Mammary epithelial cell (primary cell): ENCODE measurements at regions of chr21 and their contacts with region 1.

Region 1: GRCh38 chr21:42931576-42932258 is 6.3 kb upstream of the ERVH48-1 start:
- DNase-seq: no peak
- H3K4me3 ChIP-seq: no peak overlapping the region
- H3K27ac ChIP-seq: no peak overlapping the region
- H3K4me1 ChIP-seq: no peaks in the 10 kb centered on the region
- H3K27me3 ChIP-seq: no peaks in the 10 kb centered on the region
- CTCF ChIP-seq: no peak

Region 2: GRCh38 chr21:42818328-42818749 is 113.4 kb before region 1 on chr21:
- CTCF ChIA-PET with region 1: no interaction called
- dilution Hi-C with region 1: no loop called
- in situ Hi-C with region 1: no loop called
- intact Hi-C with region 1: no loop called
- DNase-seq: peak; percentile 45
- H3K4me3 ChIP-seq: no peak overlapping the region
- H3K27ac ChIP-seq: no peak overlapping the region
- H3K4me1 ChIP-seq: no peaks in the 10 kb centered on the region
- H3K27me3 ChIP-seq: no peaks in the 10 kb centered on the region
- CTCF ChIP-seq: peak; percentile 92 to 93

Region 3: DNA sequence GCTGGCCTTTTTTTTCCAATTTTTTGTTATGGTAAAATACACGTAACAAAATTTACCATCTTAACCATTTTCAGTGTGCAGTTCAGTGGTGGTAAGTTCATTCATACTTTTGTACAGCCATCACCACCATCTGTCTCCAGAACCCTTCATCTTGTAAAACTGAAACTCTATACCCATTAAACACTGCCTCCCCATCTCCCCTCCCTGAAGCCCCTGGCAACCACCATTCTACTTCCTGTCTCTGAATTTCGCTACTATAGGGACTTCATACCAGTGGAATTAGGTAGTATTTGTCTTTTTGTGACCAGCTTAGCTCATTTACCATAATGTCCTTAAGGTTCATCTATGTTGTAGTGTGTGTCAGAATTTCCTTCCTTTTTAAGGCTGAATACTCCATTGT is 51.4 kb after region 1 on chr21:
- CTCF ChIA-PET with region 1: no interaction called
- dilution Hi-C with region 1: loop called (anchors 5 kb)
- in situ Hi-C with region 1: loop called in 1 of 2 experiments (anchors 10 kb)
- intact Hi-C with region 1: no loop called
- DNase-seq: no peak
- H3K4me3 ChIP-seq: no peak overlapping the region
- H3K27ac ChIP-seq: no peak overlapping the region
- H3K4me1 ChIP-seq: no peaks in the 10 kb centered on the region
- H3K27me3 ChIP-seq: no peaks in the 10 kb centered on the region
- CTCF ChIP-seq: no peak

Region 4: GRCh38 chr21:43024440-43025136 is 92.9 kb after region 1 on chr21:
- CTCF ChIA-PET with region 1: no interaction called
- dilution Hi-C with region 1: no loop called
- in situ Hi-C with region 1: no loop called
- intact Hi-C with region 1: loop called (anchors 5 kb)
- DNase-seq: no peak
- H3K4me3 ChIP-seq: no peak overlapping the region
- H3K27ac ChIP-seq: no peak overlapping the region
- H3K4me1 ChIP-seq: no peaks in the 10 kb centered on the region
- H3K27me3 ChIP-seq: no peaks in the 10 kb centered on the region
- CTCF ChIP-seq: no peak